CD14-positive monocyte (primary cell): ENCODE measurements at regions of chr17 and their contacts with region 1.

Region 1: GRCh38 chr17:1865252-1866037 is 35.6 kb downstream of the RPA1 start:
- DNase-seq: peak; percentile 30 to 40 (median 32)
- H3K4me3 ChIP-seq: no peak overlapping the region
- H3K4me3 Mint-ChIP-seq: no peak overlapping the region
- H3K27ac ChIP-seq: no peak overlapping the region
- H3K27ac Mint-ChIP-seq: no peak overlapping the region
- H3K4me1 ChIP-seq: no peaks in the 10 kb centered on the region
- H3K4me1 Mint-ChIP-seq: no peaks in the 10 kb centered on the region
- H3K27me3 ChIP-seq: no peaks in the 10 kb centered on the region
- H3K27me3 Mint-ChIP-seq: no peaks in the 10 kb centered on the region
- CTCF ChIP-seq: peak; percentile 80

Region 2: DNA sequence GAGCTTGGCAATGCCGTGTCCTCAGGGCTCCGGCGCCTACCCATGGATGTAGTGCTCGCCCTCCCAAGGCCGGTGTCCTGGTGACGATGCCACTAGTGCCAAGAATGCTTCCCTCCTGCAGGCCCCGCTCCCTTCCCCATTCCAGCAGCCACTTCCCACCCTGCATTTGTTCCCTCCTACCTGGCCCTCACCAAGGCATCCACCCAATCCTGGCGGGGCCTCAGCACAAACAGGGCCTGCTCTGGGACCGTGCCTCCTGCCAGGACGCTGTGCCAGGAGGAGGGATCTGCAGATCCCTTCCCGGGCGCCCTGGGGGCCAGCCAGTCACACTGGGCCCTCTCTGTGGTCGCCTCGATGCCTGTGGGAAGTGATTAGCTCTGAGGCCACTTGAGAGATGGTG is 710.7 kb before region 1 on chr17:
- intact Hi-C with region 1: loop called in 1 of 2 experiments (anchors 5 kb)
- DNase-seq: no peak
- H3K4me3 ChIP-seq: no peak overlapping the region
- H3K4me3 Mint-ChIP-seq: no peak overlapping the region
- H3K27ac ChIP-seq: no peak overlapping the region
- H3K27ac Mint-ChIP-seq: no peak overlapping the region
- H3K4me1 ChIP-seq: peaks cover 11 to 17% of the 10 kb centered on the region in 2 donors
- H3K4me1 Mint-ChIP-seq: peaks cover 15% of the 10 kb centered on the region
- H3K27me3 ChIP-seq: no peaks in the 10 kb centered on the region
- H3K27me3 Mint-ChIP-seq: no peaks in the 10 kb centered on the region
- CTCF ChIP-seq: no peak